HepG2 (cell line): ENCODE measurements at regions of chr9 and their contacts with region 1.

Region 1: GRCh38 chr9:137521405-137521985 is 28.7 kb downstream of the PNPLA7 start:
- DNase-seq: no peak
- ATAC-seq: no peak
- H3K4me3 ChIP-seq: no peak overlapping the region
- H3K27ac ChIP-seq: no peak overlapping the region
- H3K4me1 ChIP-seq: no peaks in the 10 kb centered on the region
- H3K27me3 ChIP-seq: no peaks in the 10 kb centered on the region
- CTCF ChIP-seq: no peak
- EP300 ChIP-seq: no peak
- POLR2A ChIP-seq: no peak
- RAD21 ChIP-seq: no peak

Region 2: GRCh38 chr9:137286975-137287383 is 234.5 kb before region 1 on chr9:
- CTCF ChIA-PET with region 1: no interaction called
- POLR2A ChIA-PET with region 1: no interaction called
- in situ Hi-C with region 1: loop called (anchors 10 kb)
- intact Hi-C with region 1: no loop called
- DNase-seq: peak; percentile 68
- ATAC-seq: peak; percentile 98
- H3K4me3 ChIP-seq: no peak overlapping the region
- H3K27ac ChIP-seq: no peak overlapping the region
- H3K4me1 ChIP-seq: peaks cover 13% of the 10 kb centered on the region
- H3K27me3 ChIP-seq: no peaks in the 10 kb centered on the region
- CTCF ChIP-seq: peak; percentile 92
- EP300 ChIP-seq: no peak
- POLR2A ChIP-seq: no peak
- RAD21 ChIP-seq: peak; percentile 84

Region 3: GRCh38 chr9:137406876-137407589 is 114.5 kb before region 1 on chr9:
- CTCF ChIA-PET with region 1: no interaction called
- POLR2A ChIA-PET with region 1: no interaction called
- in situ Hi-C with region 1: no loop called
- intact Hi-C with region 1: no loop called
- DNase-seq: peak; percentile 42
- ATAC-seq: peak; percentile 90
- H3K4me3 ChIP-seq: peak overlapping the region; percentile 50 to 69 (median 57)
- H3K27ac ChIP-seq: no peak overlapping the region
- H3K4me1 ChIP-seq: peaks cover 13% of the 10 kb centered on the region
- H3K27me3 ChIP-seq: no peaks in the 10 kb centered on the region
- CTCF ChIP-seq: peak; percentile 85
- EP300 ChIP-seq: no peak
- POLR2A ChIP-seq: no peak
- RAD21 ChIP-seq: peak; percentile 97

Region 4: DNA sequence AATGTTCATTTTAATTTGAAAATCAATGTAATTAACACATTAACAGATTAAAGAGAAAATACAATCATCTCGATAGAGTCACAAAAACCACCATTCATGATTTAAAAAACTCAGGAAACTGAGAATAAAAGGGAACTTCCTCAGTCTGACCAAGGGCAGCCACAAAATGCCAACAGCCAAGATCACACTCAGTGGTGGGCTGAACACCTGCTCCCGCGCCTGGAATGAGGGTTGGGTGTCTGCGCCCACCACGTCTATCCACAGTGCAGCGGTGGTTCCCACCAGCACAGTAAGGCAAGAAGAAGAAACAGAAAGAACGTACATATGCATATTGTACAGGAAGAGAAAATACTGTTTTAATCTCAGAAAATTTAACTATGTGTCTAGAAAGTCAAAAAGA is 50.7 kb before region 1 on chr9:
- CTCF ChIA-PET with region 1: no interaction called
- POLR2A ChIA-PET with region 1: no interaction called
- in situ Hi-C with region 1: no loop called
- intact Hi-C with region 1: no loop called
- DNase-seq: no peak
- ATAC-seq: no peak
- H3K4me3 ChIP-seq: no peak overlapping the region
- H3K27ac ChIP-seq: no peak overlapping the region
- H3K4me1 ChIP-seq: peaks cover 5% of the 10 kb centered on the region
- H3K27me3 ChIP-seq: peaks cover 0 to 10% of the 10 kb centered on the region in 2 experiments; a peak in 3 of 5 replicates
- CTCF ChIP-seq: no peak
- EP300 ChIP-seq: no peak
- POLR2A ChIP-seq: no peak
- RAD21 ChIP-seq: no peak

Region 5: DNA sequence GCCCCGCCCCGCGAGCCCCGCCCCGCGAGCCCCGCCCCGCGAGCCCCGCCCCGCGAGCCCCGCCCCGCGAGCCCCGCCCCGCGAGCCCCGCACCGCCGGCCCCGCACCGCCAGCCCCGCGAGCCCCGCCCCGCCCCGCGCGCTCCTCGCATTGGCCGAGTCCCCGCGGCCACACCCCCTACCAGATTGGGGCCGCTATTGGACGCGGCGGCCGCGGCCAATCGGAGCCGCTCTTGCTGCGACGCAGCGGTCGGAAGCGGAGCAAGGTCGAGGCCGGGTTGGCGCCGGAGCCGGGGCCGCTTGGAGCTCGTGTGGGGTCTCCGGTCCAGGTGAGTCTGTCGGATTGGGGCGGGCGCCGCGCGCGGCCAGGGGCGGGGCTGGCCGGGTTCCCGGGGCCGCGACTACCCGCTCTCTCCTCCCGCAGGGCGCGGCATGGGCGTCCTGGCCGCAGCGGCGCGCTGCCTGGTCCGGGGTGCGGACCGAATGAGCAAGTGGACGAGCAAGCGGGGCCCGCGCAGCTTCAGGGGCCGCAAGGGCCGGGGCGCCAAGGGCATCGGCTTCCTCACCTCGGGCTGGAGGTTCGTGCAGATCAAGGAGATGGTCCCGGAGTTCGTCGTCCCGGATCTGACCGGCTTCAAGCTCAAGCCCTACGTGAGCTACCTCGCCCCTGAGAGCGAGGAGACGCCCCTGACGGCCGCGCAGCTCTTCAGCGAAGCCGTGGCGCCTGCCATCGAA is 30.3 kb after region 1 on chr9 and contains the start of gene MRPL41:
- CTCF ChIA-PET with region 1: no interaction called
- POLR2A ChIA-PET with region 1: no interaction called
- in situ Hi-C with region 1: no loop called
- intact Hi-C with region 1: no loop called
- DNase-seq: peak; percentile 84
- ATAC-seq: peak; percentile 84
- H3K4me3 ChIP-seq: peak within 1 kb of the TSS; percentile 82 to 88 (median 84)
- H3K27ac ChIP-seq: peak within 1 kb of the TSS; percentile 91
- H3K4me1 ChIP-seq: peaks cover 23% of the 10 kb centered on the region
- H3K27me3 ChIP-seq: no peaks in the 10 kb centered on the region
- CTCF ChIP-seq: no peak
- EP300 ChIP-seq: no peak
- POLR2A ChIP-seq: peak; percentile 71 to 72
- RAD21 ChIP-seq: 0 out of 2 replicates have a peak, but pooled peaks have one; percentile 21
- total RNA-seq, gene MRPL41: 48.9 and 54.0 TPM in 2 replicates

Region 6: DNA sequence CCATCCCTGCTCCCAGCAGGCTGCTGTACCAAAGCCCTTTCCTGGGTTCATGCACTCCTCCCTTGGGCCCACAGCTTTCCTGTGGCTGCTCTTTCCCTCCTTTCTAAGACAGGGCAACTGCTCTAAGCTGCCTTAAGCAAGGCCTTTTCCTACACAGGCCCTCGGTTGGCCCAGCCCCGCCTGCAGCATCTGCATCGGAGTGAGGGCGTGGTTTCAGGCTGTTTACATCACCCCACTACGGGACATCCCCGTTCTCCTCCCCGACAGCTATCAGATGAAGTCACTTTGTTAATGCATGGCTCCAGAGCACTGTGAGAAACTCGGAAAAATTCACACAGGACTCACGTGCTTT is 53.8 kb after region 1 on chr9:
- CTCF ChIA-PET with region 1: no interaction called
- POLR2A ChIA-PET with region 1: no interaction called
- in situ Hi-C with region 1: no loop called
- intact Hi-C with region 1: no loop called
- DNase-seq: no peak
- ATAC-seq: no peak
- H3K4me3 ChIP-seq: no peak overlapping the region
- H3K27ac ChIP-seq: no peak overlapping the region
- H3K4me1 ChIP-seq: peaks cover 29% of the 10 kb centered on the region
- H3K27me3 ChIP-seq: no peaks in the 10 kb centered on the region
- CTCF ChIP-seq: no peak
- EP300 ChIP-seq: no peak
- POLR2A ChIP-seq: no peak
- RAD21 ChIP-seq: no peak